T-cell (primary cell): ENCODE measurements at regions of chr6 and their contacts with region 1.

Region 1: DNA sequence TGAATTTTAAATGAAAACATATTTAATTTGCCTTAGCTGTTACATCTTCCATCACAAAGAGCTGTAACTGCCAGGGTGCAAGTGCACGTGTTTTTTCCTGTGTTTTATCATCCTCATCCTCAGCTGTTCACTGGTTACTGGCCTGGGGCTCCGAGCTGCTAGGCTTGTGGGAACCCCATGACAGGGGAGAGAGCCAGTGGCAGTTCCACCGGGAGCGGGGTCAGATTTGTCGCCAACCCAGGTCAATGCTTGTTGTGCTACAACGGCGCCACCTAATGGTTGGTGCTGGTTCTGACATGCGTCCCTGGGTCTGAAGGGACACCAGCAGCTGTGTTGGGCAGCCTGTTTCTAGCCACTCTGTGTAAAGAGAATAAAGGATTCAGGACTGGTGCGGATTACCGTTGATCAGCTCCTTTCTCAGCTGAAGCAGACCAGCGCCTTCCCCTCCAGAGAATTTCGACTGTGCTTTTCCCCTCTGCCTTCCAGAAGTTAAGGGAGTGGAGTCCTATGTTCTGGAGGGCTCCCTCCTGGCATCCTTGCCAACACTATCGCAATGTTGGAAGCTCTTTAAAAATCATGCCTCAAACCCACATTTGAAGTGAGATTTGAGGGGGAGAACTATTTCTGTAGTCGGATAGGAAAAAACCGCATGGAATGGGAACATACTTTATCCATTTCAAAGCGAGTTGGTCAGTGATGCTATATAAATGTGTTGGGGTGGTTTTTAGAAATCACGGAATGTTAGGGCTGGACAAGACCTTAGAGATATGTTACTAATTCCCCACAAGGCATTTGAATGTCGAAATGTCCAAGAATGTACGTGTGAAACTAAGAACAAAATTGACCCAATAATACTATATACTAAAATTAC is 32.1 kb downstream of the SUMO4 start:
- DNase-seq: peak; percentile 54 to 92 (median 79)
- ATAC-seq: peak; percentile 86 to 94 (median 91)
- H3K4me3 ChIP-seq: peak overlapping the region; percentile 7 to 32
- H3K4me3 Mint-ChIP-seq: peak overlapping the region in 2 of 3 donors; percentile 54 to 67
- H3K27ac ChIP-seq: no peak overlapping the region
- H3K27ac Mint-ChIP-seq: peak overlapping the region; percentile 78 to 84
- H3K4me1 ChIP-seq: peaks cover 6 to 9% of the 10 kb centered on the region in 2 experiments
- H3K4me1 Mint-ChIP-seq: peaks cover under 1 to 6% (median 5%) of the 10 kb centered on the region in 3 donors
- H3K27me3 ChIP-seq: no peaks in the 10 kb centered on the region
- H3K27me3 Mint-ChIP-seq: no peaks in the 10 kb centered on the region

Region 2: DNA sequence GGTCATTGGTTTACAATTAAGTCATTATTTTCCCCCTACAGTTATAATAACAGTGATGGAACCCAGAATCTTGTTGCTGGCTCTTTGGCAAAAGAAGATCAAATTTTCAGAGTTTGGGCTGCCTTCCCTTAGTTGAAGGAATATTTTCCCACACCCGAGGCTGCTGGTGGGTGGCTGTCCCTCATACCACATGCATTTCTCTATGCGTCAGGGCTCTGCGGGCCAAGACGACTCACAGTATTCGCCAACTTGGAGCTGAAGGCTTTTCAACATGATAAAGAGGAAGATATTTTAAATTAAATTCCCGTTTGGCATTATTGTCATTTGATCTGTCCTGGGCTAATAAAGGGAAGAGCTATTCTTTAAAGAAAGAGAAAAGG is 1191.7 kb before region 1 on chr6:
- CTCF ChIA-PET with region 1: no interaction called
- POLR2A ChIA-PET with region 1: no interaction called
- DNase-seq: no peak
- ATAC-seq: no peak
- H3K4me3 ChIP-seq: no peak overlapping the region
- H3K4me3 Mint-ChIP-seq: no peak overlapping the region
- H3K27ac ChIP-seq: no peak overlapping the region
- H3K27ac Mint-ChIP-seq: no peak overlapping the region
- H3K4me1 ChIP-seq: no peaks in the 10 kb centered on the region
- H3K4me1 Mint-ChIP-seq: no peaks in the 10 kb centered on the region
- H3K27me3 ChIP-seq: peaks cover 0 to 2% of the 10 kb centered on the region in 2 experiments
- H3K27me3 Mint-ChIP-seq: peaks cover 22 to 27% of the 10 kb centered on the region in 2 donors

Region 3: GRCh38 chr6:148700741-148701311 is 731.3 kb before region 1 on chr6:
- CTCF ChIA-PET with region 1: no interaction called
- POLR2A ChIA-PET with region 1: no interaction called
- DNase-seq: peak in 2 of 35 experiments; percentile 14 to 49
- ATAC-seq: peak in 3 of 4 experiments; percentile 47 to 70 (median 60)
- H3K4me3 ChIP-seq: peak overlapping the region; percentile 30 to 39
- H3K4me3 Mint-ChIP-seq: peak overlapping the region; percentile 64 to 79 (median 77)
- H3K27ac ChIP-seq: no peak overlapping the region
- H3K27ac Mint-ChIP-seq: peak overlapping the region in 1 of 2 donors; percentile 84
- H3K4me1 ChIP-seq: peaks cover 2 to 8% of the 10 kb centered on the region in 2 experiments
- H3K4me1 Mint-ChIP-seq: peaks cover 11 to 20% (median 15%) of the 10 kb centered on the region in 3 donors
- H3K27me3 ChIP-seq: peaks cover 0 to 2% of the 10 kb centered on the region in 2 experiments
- H3K27me3 Mint-ChIP-seq: no peaks in the 10 kb centered on the region

Region 4: GRCh38 chr6:149028767-149029405 is 403.3 kb before region 1 on chr6:
- CTCF ChIA-PET with region 1: interaction called, 16 to 38 read pairs
- POLR2A ChIA-PET with region 1: interaction called in 1 of 2 experiments, 4 read pairs
- DNase-seq: peak in 32 of 35 experiments; percentile 29 to 92 (median 54)
- ATAC-seq: peak; percentile 34 to 77 (median 62)
- H3K4me3 ChIP-seq: no peak overlapping the region
- H3K4me3 Mint-ChIP-seq: no peak overlapping the region
- H3K27ac ChIP-seq: no peak overlapping the region
- H3K27ac Mint-ChIP-seq: peak overlapping the region in 1 of 2 donors; percentile 81
- H3K4me1 ChIP-seq: peaks cover 3 to 17% of the 10 kb centered on the region in 2 experiments
- H3K4me1 Mint-ChIP-seq: peaks cover 23 to 49% (median 34%) of the 10 kb centered on the region in 3 donors
- H3K27me3 ChIP-seq: peaks cover 0 to 4% of the 10 kb centered on the region in 2 experiments
- H3K27me3 Mint-ChIP-seq: no peaks in the 10 kb centered on the region

Region 5: DNA sequence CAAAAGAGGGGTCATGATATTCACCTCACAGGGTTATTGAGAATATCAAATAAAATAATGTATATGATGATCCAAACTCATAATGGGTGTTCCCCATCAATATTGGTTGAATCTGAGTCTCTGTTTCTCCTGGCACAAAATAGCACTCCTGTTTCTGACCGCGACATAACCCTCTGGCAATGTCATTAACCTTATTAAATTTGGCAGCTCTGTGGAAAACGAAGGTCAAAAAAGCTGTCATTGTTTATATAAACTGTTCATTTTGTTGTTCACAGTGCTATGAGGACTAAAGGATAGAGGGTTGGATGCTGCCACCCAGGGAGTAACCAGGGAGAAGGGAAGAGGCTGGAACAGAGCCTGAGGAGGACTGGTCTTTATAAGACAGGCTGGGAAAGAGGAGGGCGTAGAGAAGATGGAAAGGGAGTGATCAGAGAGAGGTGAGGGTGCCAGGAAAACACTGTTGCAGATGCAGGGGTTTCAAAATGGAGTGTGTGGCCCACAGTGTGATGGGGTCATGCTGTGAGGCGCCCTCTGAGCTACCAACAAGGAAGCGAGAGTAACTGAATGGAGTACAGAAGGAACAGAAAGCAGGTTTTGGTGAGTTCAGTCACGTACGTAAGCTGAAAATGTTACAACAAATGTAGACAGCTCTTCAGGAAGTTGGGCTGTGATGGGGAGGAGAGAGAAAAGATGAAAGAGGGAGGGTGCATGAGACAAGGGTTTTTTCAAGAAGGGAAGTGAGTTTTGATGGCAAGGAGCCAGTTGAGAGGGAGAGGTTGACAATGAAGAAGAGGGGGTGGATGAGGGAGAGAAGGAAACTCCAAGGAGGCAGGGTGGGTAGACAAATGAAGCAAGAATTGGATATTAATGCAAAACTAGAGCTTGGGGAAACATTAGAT is 366.2 kb before region 1 on chr6:
- CTCF ChIA-PET with region 1: interaction called, 7 to 15 read pairs
- POLR2A ChIA-PET with region 1: no interaction called
- DNase-seq: peak in 34 of 35 experiments; percentile 11 to 86 (median 56)
- ATAC-seq: peak; percentile 92 to 98 (median 97)
- H3K4me3 ChIP-seq: peak overlapping the region in 1 of 2 donors; percentile 2
- H3K4me3 Mint-ChIP-seq: peak overlapping the region; percentile 55 to 68 (median 57)
- H3K27ac ChIP-seq: peak overlapping the region; percentile 85
- H3K27ac Mint-ChIP-seq: peak overlapping the region; percentile 97 to 98
- H3K4me1 ChIP-seq: peaks cover 13 to 23% of the 10 kb centered on the region in 2 experiments
- H3K4me1 Mint-ChIP-seq: peaks cover 31 to 48% (median 34%) of the 10 kb centered on the region in 3 donors
- H3K27me3 ChIP-seq: no peaks in the 10 kb centered on the region
- H3K27me3 Mint-ChIP-seq: no peaks in the 10 kb centered on the region

Region 6: GRCh38 chr6:149082286-149082707 is 349.8 kb before region 1 on chr6:
- CTCF ChIA-PET with region 1: interaction called, 8 to 37 read pairs
- POLR2A ChIA-PET with region 1: interaction called in 1 of 2 experiments, 3 read pairs
- DNase-seq: peak; percentile 58 to 91 (median 80)
- ATAC-seq: peak; percentile 85 to 96 (median 92)
- H3K4me3 ChIP-seq: no peak overlapping the region
- H3K4me3 Mint-ChIP-seq: peak overlapping the region in 1 of 3 donors; percentile 13
- H3K27ac ChIP-seq: no peak overlapping the region
- H3K27ac Mint-ChIP-seq: peak overlapping the region in 1 of 2 donors; percentile 71
- H3K4me1 ChIP-seq: peaks cover 3 to 8% of the 10 kb centered on the region in 2 experiments
- H3K4me1 Mint-ChIP-seq: peaks cover 39 to 44% (median 43%) of the 10 kb centered on the region in 3 donors
- H3K27me3 ChIP-seq: no peaks in the 10 kb centered on the region
- H3K27me3 Mint-ChIP-seq: no peaks in the 10 kb centered on the region

Region 7: GRCh38 chr6:149419696-149420404 is 12.3 kb before region 1 on chr6:
- CTCF ChIA-PET with region 1: interaction called in 1 of 2 experiments, 12 read pairs
- POLR2A ChIA-PET with region 1: interaction called in 1 of 2 experiments, 4 read pairs
- DNase-seq: no peak
- ATAC-seq: no peak
- H3K4me3 ChIP-seq: no peak overlapping the region
- H3K4me3 Mint-ChIP-seq: no peak overlapping the region
- H3K27ac ChIP-seq: no peak overlapping the region
- H3K27ac Mint-ChIP-seq: no peak overlapping the region
- H3K4me1 ChIP-seq: no peaks in the 10 kb centered on the region
- H3K4me1 Mint-ChIP-seq: peaks cover 0 to 13% (median 2%) of the 10 kb centered on the region in 3 donors
- H3K27me3 ChIP-seq: no peaks in the 10 kb centered on the region
- H3K27me3 Mint-ChIP-seq: no peaks in the 10 kb centered on the region